ENCODE measurements at regions of chr6 and their contacts with region 1.

Region 1: GRCh38 chr6:6008648-6009421 is 2.1 kb upstream of the NRN1 start:
- DNase-seq: peak; percentile 91
- ATAC-seq: peak; percentile 74
- H3K4me3 Mint-ChIP-seq: peak overlapping the region; percentile 73
- H3K27ac Mint-ChIP-seq: peak overlapping the region; percentile 86
- H3K4me1 Mint-ChIP-seq: peaks cover 40% of the 10 kb centered on the region
- H3K27me3 Mint-ChIP-seq: peaks cover 58% of the 10 kb centered on the region

Region 2: GRCh38 chr6:4775584-4776494 is 1233.0 kb before region 1 on chr6 and contains the start of gene CDYL:
- CTCF ChIA-PET with region 1: no interaction called
- POLR2A ChIA-PET with region 1: no interaction called
- intact Hi-C with region 1: loop called in 1 of 2 experiments (anchors 2 kb)
- DNase-seq: peak; percentile 93
- ATAC-seq: peak; percentile 79
- H3K4me3 Mint-ChIP-seq: peak within 1 kb of the TSS; percentile 81
- H3K27ac Mint-ChIP-seq: peak within 1 kb of the TSS; percentile 92
- H3K4me1 Mint-ChIP-seq: peaks cover 54% of the 10 kb centered on the region
- H3K27me3 Mint-ChIP-seq: peaks cover 11% of the 10 kb centered on the region
- total RNA-seq, gene CDYL: 22.1 to 33.7 TPM

Region 3: DNA sequence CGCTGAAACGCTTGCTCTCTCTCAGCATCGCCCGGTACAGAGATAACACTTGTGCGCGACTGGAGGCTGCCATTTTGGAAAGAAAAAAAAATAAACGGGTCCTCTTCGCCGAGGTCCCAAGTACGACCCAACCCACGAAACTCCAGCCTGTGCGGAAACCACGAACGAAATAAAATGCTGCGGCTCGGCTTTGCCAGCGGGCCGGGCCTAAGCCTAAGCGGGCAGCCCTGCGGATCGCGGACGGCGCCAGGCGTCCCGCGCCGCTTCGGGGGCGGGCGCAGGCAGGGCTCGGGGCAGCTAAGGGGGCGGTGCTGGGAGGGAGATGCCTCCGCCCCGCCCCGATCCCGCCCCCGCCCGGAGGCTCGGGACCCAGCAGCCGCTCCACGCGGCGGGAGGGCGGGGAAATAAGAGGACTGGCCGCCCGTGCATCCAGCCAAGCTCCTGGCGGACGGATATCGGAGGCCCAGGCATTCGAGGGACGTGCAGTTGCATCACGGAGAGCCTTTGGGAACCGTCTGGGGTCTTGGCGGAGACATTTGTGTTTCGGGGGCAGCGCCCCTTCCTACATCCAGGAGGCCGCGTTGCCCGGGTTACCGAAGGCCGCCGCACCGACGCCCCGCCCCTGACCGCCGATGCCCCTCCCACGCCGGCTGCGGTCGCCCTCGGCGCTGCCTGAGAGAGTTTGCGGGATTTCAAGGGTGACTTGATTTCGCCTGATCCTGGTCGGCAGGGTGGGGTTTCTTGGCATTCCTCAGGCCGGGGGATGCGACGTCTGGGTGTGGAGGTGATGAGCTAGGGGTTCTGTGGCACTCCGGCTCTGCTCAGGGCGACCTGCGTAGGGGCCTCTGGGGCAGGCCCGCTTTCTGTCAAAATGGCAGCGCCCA is 747.9 kb before region 1 on chr6 and contains the starts of genes FARS2 and LYRM4:
- CTCF ChIA-PET with region 1: no interaction called
- POLR2A ChIA-PET with region 1: no interaction called
- intact Hi-C with region 1: loop called in 1 of 2 experiments (anchors 5 kb)
- DNase-seq: peak; percentile 94
- ATAC-seq: peak; percentile 80
- H3K4me3 Mint-ChIP-seq: peak within 1 kb of the TSS; percentile 92
- H3K27ac Mint-ChIP-seq: peak within 1 kb of the TSS; percentile 97
- H3K4me1 Mint-ChIP-seq: peaks cover 36% of the 10 kb centered on the region
- H3K27me3 Mint-ChIP-seq: no peaks in the 10 kb centered on the region
- total RNA-seq, gene FARS2: 17.6 to 18.4 TPM
- total RNA-seq, gene LYRM4: 46.4 to 53.4 TPM

Region 4: GRCh38 chr6:5517796-5518195 is 491.0 kb before region 1 on chr6:
- CTCF ChIA-PET with region 1: no interaction called
- POLR2A ChIA-PET with region 1: no interaction called
- intact Hi-C with region 1: loop called in 1 of 2 experiments (anchors 5 kb)
- DNase-seq: peak; percentile 72
- ATAC-seq: peak; percentile 94
- H3K4me3 Mint-ChIP-seq: no peak overlapping the region
- H3K27ac Mint-ChIP-seq: peak overlapping the region; percentile 87
- H3K4me1 Mint-ChIP-seq: peaks cover 43% of the 10 kb centered on the region
- H3K27me3 Mint-ChIP-seq: no peaks in the 10 kb centered on the region

Region 5: GRCh38 chr6:5866547-5867101 is 142.2 kb before region 1 on chr6:
- CTCF ChIA-PET with region 1: no interaction called
- POLR2A ChIA-PET with region 1: no interaction called
- intact Hi-C with region 1: loop called in 1 of 2 experiments (anchors 5 kb)
- DNase-seq: peak; percentile 31
- ATAC-seq: peak; percentile 68
- H3K4me3 Mint-ChIP-seq: peak overlapping the region; percentile 56
- H3K27ac Mint-ChIP-seq: peak overlapping the region; percentile 85
- H3K4me1 Mint-ChIP-seq: peaks cover 46% of the 10 kb centered on the region
- H3K27me3 Mint-ChIP-seq: no peaks in the 10 kb centered on the region

Region 6: DNA sequence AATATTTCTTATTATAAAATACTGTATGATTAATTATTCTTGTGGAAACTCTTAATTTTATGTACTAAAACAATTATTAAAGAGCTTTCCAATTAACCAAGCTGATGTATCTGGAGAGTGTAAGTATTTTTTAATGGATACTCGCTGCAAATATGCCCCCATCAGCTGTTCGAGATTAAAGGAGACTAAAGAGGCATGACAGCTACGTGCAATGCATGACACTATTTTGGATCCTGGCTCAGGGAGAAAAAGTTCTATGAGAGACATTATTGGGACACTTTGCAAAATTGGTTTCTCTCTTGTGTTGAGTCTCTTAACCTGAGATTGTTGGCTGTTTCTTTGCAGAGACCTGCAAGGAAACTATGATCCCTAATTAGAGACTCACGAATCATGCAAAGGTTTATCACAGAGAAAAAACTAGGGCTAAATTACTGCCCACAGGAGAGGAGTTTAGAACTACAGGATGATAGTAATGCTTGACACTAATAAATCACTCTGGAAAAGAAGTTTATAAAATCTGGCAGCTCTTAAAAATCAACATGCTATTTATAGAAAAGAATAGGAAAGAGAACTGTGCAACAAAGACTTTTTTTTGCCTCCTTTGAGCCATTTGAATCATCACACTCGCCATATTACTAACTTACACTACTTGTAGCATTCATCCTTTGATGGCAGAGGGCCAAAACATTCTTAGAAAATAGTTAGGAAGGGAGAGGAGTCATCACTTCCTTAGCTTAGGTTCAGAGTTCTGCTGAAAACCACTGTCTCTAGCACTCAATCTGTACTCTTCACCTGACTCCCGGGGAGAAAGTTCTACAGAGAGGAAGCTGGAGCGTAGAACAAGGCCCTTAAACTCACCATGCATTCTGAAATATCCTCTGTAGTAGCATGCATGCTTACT is 27.5 kb before region 1 on chr6:
- CTCF ChIA-PET with region 1: no interaction called
- POLR2A ChIA-PET with region 1: no interaction called
- intact Hi-C with region 1: loop called in 1 of 2 experiments (anchors 1 kb)
- DNase-seq: no peak
- ATAC-seq: peak; percentile 69
- H3K4me3 Mint-ChIP-seq: no peak overlapping the region
- H3K27ac Mint-ChIP-seq: no peak overlapping the region
- H3K4me1 Mint-ChIP-seq: peaks cover 44% of the 10 kb centered on the region
- H3K27me3 Mint-ChIP-seq: no peaks in the 10 kb centered on the region

Region 7: GRCh38 chr6:6515691-6516607 is 507.1 kb after region 1 on chr6:
- CTCF ChIA-PET with region 1: no interaction called
- POLR2A ChIA-PET with region 1: no interaction called
- intact Hi-C with region 1: loop called in 1 of 2 experiments (anchors 5 kb)
- DNase-seq: peak; percentile 84
- ATAC-seq: peak; percentile 90
- H3K4me3 Mint-ChIP-seq: no peak overlapping the region
- H3K27ac Mint-ChIP-seq: no peak overlapping the region
- H3K4me1 Mint-ChIP-seq: peaks cover 18% of the 10 kb centered on the region
- H3K27me3 Mint-ChIP-seq: peaks cover 78% of the 10 kb centered on the region

Measured in activated CD4-positive, alpha-beta T cell treated with anti-CD3 and anti-CD28 coated beads for 36 hours (primary cell).